A673 (cell line): ENCODE measurements at regions of chr20 and their contacts with region 1.

Region 1: DNA sequence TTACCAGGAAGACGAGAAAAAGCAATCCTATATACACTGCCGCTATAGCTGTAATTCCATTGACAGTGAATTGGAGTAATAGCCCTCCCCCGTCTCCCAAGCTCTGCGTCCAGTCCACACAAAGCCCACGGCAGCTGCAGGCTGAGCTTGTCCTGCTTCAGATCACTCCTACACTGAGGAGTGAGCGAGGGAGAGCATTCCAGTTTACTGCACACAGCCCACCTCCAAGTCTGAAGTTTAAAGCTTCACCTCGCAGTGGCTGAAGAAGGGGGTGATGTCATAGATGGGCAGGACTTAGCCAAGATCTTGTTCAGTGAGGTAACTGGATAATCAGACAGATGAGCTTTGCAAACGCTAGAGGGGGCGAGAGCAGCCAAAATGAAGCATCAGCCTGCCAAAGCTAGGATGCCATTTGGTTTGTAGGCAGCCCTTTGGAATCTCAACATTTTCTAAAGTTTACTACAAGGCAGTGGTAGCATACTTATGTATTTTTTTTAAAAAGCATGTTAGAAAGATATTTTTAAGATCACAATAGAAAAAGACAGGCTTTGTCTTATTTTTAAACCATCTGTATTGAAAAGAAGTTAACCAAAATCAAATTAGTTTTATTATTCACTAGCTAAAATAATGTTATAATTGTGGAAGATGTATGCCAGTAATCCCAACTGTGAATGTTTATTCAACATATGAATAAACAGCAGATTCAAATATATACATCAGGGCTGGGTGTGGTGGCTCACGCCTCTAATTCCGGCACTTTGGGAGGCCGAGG is at the start of gene FLRT3:
- DNase-seq: peak; percentile 88
- H3K4me3 ChIP-seq: peak within 1 kb of the TSS; percentile 35
- H3K27ac ChIP-seq: no peak within 1 kb of the TSS
- H3K4me1 ChIP-seq: no peaks in the 10 kb centered on the region
- H3K27me3 ChIP-seq: peaks cover 5% of the 10 kb centered on the region
- CTCF ChIP-seq: peak; percentile 81
- total RNA-seq, gene FLRT3: not detected in 2 replicates

Region 2: GRCh38 chr20:14127514-14128223 is 209.9 kb before region 1 on chr20:
- CTCF ChIA-PET with region 1: no interaction called
- POLR2A ChIA-PET with region 1: no interaction called
- intact Hi-C with region 1: no loop called
- DNase-seq: no peak
- H3K4me3 ChIP-seq: no peak overlapping the region
- H3K27ac ChIP-seq: no peak overlapping the region
- H3K4me1 ChIP-seq: no peaks in the 10 kb centered on the region
- H3K27me3 ChIP-seq: no peaks in the 10 kb centered on the region
- CTCF ChIP-seq: no peak

Region 3: DNA sequence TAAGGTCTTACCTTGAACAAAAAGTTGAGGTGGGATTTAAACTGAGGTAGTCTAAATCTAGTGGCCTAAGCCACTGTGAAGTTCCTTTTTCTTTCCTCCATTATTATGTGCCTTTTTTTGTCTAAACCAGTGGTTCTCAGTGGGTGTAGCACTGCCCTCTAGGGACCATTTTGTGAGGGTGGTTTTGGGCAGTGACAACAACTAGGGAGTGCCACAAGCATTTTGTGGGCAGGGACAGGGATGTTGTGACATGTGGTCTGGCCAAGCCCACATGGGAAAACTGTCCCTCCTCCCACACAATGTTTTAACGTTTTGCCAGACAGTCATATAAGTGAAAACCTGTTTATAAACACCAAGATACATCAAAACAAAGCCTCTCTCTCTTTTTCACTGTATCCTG is 899.2 kb after region 1 on chr20:
- CTCF ChIA-PET with region 1: no interaction called
- POLR2A ChIA-PET with region 1: no interaction called
- intact Hi-C with region 1: loop called (anchors 5 kb)
- DNase-seq: peak; percentile 22
- H3K4me3 ChIP-seq: no peak overlapping the region
- H3K27ac ChIP-seq: no peak overlapping the region
- H3K4me1 ChIP-seq: no peaks in the 10 kb centered on the region
- H3K27me3 ChIP-seq: no peaks in the 10 kb centered on the region
- CTCF ChIP-seq: peak; percentile 51